ENCODE measurements at regions of chr1 and their contacts with region 1.

Region 1: DNA sequence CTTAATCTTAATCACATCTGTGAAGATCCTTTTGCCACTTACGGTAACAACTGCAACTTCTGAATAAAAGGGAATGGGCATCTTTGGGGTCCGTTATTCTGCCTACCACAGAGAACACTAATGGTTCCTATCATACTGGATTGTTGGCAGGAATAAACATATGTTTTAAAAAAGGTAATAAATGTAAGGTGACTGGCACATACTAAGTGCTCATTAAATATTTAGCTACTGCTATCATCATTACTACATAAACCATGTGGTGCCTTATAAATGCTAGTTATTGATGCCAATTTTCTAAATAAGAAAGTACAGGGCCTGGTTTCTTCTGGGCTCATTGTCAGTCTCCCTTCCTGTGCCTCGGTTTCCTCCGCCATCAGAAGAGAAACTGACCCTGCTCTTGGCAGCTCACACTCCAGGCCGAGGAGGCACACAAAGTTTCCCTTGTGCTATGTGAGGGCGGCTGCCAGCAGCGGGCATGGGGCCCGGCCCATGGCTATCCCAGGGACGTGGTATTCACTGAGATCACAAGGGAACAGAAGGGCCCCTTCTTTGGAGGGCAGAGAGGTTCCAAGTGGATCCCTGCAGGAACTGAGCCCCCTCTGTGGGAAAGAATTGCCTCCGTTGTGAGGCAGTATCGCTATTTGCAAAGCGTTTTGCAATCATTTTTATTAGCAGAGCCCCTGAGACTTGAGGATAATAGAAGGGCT is 26.2 kb downstream of the NAV1 start:
- DNase-seq: peak; percentile 76 to 87
- ATAC-seq: peak; percentile 62
- H3K4me3 ChIP-seq: no peak overlapping the region
- H3K27ac ChIP-seq: peak overlapping the region; percentile 6 to 31
- H3K4me1 ChIP-seq: no peaks in the 10 kb centered on the region
- H3K27me3 ChIP-seq: no peaks in the 10 kb centered on the region

Region 2: DNA sequence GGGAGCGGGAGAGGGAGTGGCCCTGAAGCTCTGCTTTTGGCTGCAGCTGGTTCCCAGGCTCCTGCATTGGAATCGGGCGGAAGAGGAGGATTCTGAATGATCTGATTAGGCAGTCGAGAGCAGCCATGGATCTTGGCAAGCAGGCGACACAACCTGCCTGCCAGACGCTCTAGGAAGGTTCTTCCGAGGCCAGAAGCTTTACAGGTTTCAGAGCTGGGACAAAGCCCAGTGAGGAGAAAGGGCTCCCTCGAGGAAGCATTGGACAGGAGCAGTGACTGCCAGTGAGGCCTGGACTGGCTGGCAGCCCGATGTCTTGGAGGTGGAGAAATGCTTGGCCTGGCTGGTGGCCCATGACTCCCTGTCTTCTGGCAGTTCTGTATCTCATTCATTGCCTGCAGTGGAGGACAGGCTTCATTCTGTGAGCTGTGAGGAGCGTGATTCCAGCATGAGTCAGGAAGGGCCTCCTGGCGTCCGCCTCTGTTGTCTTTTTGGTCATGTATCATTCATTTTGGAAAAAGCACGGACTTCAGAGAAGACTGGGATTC is 131.1 kb after region 1 on chr1:
- intact Hi-C with region 1: loop called in 1 of 2 experiments (anchors 2 kb)
- DNase-seq: peak; percentile 87 to 93
- ATAC-seq: peak; percentile 81
- H3K4me3 ChIP-seq: no peak overlapping the region
- H3K27ac ChIP-seq: peak overlapping the region in 1 of 2 donors; percentile 12
- H3K4me1 ChIP-seq: peaks cover 0 to 2% of the 10 kb centered on the region in 2 donors
- H3K27me3 ChIP-seq: no peaks in the 10 kb centered on the region

Measured in aorta (tissue), 5 donors.